Activated CD4-positive, alpha-beta memory T cell treated with anti-CD3 and anti-CD28 coated beads, Interleukin-2, amount 10 ng/mL, durations not matched to agents 7 days and 5 days (primary cell): ENCODE measurements at regions of chr17 and their contacts with region 1.

Region 1: GRCh38 chr17:28763804-28764266 is 20.0 kb downstream of the TRAF4 start:
- DNase-seq: peak; percentile 79
- H3K4me3 Mint-ChIP-seq: no peak overlapping the region
- H3K27ac Mint-ChIP-seq: no peak overlapping the region
- H3K4me1 Mint-ChIP-seq: peaks cover 28% of the 10 kb centered on the region
- H3K27me3 Mint-ChIP-seq: no peaks in the 10 kb centered on the region

Region 2: GRCh38 chr17:28726226-28727130 is 37.4 kb before region 1 on chr17 and contains the start of gene TLCD1:
- CTCF ChIA-PET with region 1: interaction called, 84 read pairs
- POLR2A ChIA-PET with region 1: interaction called, 22 read pairs
- DNase-seq: peak; percentile 93
- H3K4me3 Mint-ChIP-seq: peak within 1 kb of the TSS; percentile 95
- H3K27ac Mint-ChIP-seq: peak within 1 kb of the TSS; percentile 98
- H3K4me1 Mint-ChIP-seq: peaks cover 62% of the 10 kb centered on the region
- H3K27me3 Mint-ChIP-seq: no peaks in the 10 kb centered on the region
- total RNA-seq, gene TLCD1: 1.4 to 2.3 TPM

Region 3: DNA sequence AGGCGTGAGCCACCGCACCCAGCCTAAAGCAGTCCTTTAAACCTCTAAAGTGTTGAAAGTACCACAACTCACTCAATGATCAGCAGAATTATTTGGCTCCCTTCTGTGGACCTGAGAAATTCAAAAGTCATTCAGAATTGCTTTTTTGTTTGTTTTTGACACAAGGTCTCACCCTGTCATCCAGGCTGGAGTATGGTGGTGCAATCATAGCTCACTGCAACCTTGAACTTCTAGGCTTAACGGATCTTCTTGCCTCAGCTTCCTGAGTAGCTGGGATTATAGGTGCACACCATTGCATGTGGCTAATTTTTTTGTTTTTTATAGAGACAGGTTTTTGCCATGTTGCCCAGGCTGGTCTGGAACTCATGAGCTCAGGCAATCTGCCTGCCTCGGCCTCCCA is 24.3 kb after region 1 on chr17:
- CTCF ChIA-PET with region 1: interaction called, 31 read pairs
- POLR2A ChIA-PET with region 1: interaction called, 3 read pairs
- DNase-seq: no peak
- H3K4me3 Mint-ChIP-seq: no peak overlapping the region
- H3K27ac Mint-ChIP-seq: no peak overlapping the region
- H3K4me1 Mint-ChIP-seq: no peaks in the 10 kb centered on the region
- H3K27me3 Mint-ChIP-seq: no peaks in the 10 kb centered on the region

Region 4: GRCh38 chr17:28828294-28829040 is 64.6 kb after region 1 on chr17:
- CTCF ChIA-PET with region 1: interaction called, 17 read pairs
- POLR2A ChIA-PET with region 1: no interaction called
- DNase-seq: no peak
- H3K4me3 Mint-ChIP-seq: no peak overlapping the region
- H3K27ac Mint-ChIP-seq: no peak overlapping the region
- H3K4me1 Mint-ChIP-seq: peaks cover 7% of the 10 kb centered on the region
- H3K27me3 Mint-ChIP-seq: no peaks in the 10 kb centered on the region

Region 5: GRCh38 chr17:28896884-28897768 is 133.3 kb after region 1 on chr17 and contains the start of gene FLOT2:
- CTCF ChIA-PET with region 1: interaction called, 30 read pairs
- POLR2A ChIA-PET with region 1: interaction called, 4 read pairs
- DNase-seq: peak; percentile 69
- H3K4me3 Mint-ChIP-seq: peak within 1 kb of the TSS; percentile 96
- H3K27ac Mint-ChIP-seq: peak within 1 kb of the TSS; percentile 95
- H3K4me1 Mint-ChIP-seq: peaks cover 78% of the 10 kb centered on the region
- H3K27me3 Mint-ChIP-seq: no peaks in the 10 kb centered on the region
- total RNA-seq, gene FLOT2: 193 to 200 TPM

Region 6: GRCh38 chr17:28916302-28916934 is 152.6 kb after region 1 on chr17:
- CTCF ChIA-PET with region 1: interaction called, 32 read pairs
- POLR2A ChIA-PET with region 1: no interaction called
- DNase-seq: peak; percentile 46
- H3K4me3 Mint-ChIP-seq: no peak overlapping the region
- H3K27ac Mint-ChIP-seq: no peak overlapping the region
- H3K4me1 Mint-ChIP-seq: peaks cover 8% of the 10 kb centered on the region
- H3K27me3 Mint-ChIP-seq: no peaks in the 10 kb centered on the region